AG04449 (cell line): ENCODE measurements at regions of chr3 and their contacts with region 1.

Region 1: GRCh38 chr3:151146071-151146730 is 56.8 kb downstream of the GPR171 start:
- DNase-seq: no peak
- H3K4me3 ChIP-seq: no peak overlapping the region
- CTCF ChIP-seq: peak; percentile 79

Region 2: GRCh38 chr3:150721285-150722130 is 424.7 kb before region 1 on chr3:
- CTCF ChIA-PET with region 1: interaction called, 14 read pairs
- POLR2A ChIA-PET with region 1: no interaction called
- DNase-seq: no peak
- H3K4me3 ChIP-seq: no peak overlapping the region
- CTCF ChIP-seq: peak; percentile 63

Region 3: DNA sequence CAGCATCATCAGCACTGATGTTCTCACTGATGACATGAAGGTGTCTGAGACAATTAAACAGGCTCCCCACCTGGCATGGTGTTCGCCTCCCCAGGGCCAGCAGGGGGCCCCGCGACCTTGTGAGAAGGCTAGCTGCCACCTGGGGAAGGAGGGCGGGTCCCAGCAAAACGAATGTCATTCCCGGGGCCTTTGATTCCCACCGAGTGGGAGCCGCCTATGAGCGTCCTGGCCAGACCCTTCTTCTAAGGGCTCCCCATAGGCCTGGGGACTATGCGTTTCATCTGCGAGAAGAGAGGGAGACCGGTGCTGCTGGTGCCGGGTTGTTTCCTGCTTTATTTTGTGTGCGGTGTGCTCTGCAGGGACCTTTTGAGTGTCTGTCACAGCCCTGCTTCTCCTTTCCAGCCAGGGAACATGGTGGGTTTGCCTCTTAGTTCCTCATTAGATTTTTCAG is 220.4 kb before region 1 on chr3:
- CTCF ChIA-PET with region 1: interaction called, 11 read pairs
- POLR2A ChIA-PET with region 1: no interaction called
- DNase-seq: no peak
- H3K4me3 ChIP-seq: no peak overlapping the region
- CTCF ChIP-seq: peak; percentile 78

Region 4: GRCh38 chr3:151008699-151009098 is 137.5 kb before region 1 on chr3:
- CTCF ChIA-PET with region 1: interaction called, 219 read pairs
- POLR2A ChIA-PET with region 1: no interaction called
- DNase-seq: no peak
- H3K4me3 ChIP-seq: no peak overlapping the region
- CTCF ChIP-seq: peak; percentile 42

Region 5: DNA sequence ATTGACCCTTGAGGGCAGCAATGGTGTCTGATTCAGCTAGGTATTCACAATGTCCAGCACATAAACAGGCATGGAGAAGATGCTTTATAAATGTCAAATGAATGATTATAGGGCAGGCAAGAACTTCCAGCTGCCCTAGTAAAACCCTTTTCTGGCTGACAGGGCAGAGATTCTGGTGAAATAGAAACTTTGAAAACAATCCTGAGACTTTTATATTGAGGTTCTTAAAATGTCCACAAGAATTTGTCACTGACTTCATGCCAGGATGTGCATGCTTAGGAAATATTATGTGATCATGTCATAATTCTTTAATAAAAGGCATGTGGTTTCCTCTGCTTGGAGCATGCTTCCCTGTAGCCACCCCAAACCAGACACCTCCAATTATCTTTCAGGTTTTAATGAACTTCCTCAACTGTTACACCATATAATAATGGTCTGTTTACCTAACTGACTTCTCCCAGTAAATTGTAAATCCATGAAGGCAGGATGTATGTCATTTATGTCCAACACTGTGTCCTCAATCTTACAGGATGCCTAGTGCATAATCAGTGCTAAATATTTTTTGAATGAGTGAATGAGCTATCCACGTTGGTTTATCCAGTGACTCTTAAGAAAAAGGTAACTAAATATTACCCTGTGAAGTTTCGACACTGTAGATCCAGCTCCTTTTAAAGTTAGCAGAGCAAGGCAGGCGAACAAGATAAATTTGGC is 130.3 kb before region 1 on chr3:
- CTCF ChIA-PET with region 1: interaction called, 219 read pairs
- POLR2A ChIA-PET with region 1: no interaction called
- DNase-seq: no peak
- H3K4me3 ChIP-seq: no peak overlapping the region
- CTCF ChIP-seq: no peak

Region 6: GRCh38 chr3:151086484-151087456 is 59.4 kb before region 1 on chr3:
- CTCF ChIA-PET with region 1: interaction called, 11 read pairs
- POLR2A ChIA-PET with region 1: no interaction called
- DNase-seq: peak; percentile 34
- H3K4me3 ChIP-seq: peak overlapping the region; percentile 57
- CTCF ChIP-seq: peak; percentile 81

Region 7: DNA sequence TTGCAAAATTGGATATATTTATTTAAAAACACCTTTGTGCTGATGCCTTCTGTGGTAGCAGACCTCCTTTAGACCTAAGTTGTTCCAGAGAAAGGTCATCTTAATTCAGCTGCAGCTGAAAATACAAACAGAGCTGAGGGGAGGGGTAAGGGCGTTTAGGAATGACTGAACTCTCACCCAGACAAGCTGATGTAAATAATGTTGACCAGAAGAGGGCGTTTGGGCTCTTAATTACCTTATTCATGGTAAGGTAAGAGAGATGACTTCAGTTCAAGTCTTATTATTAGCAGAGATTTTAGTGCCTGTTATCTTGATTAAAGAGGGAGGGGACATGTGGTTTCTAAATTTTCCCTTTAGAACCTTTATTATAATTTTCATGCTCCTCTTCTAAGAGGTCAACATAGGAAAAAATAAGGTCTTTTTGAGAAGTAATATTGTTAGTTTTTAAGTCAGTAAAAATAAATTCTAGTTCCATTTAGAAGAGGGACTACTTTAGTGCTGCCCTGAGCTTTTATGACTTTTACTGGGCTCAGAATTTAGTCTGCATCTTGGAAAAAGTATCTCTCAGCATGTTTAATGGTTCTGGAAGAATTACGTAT is 10.5 kb after region 1 on chr3:
- CTCF ChIA-PET with region 1: interaction called, 15 read pairs
- POLR2A ChIA-PET with region 1: no interaction called
- DNase-seq: no peak
- H3K4me3 ChIP-seq: no peak overlapping the region
- CTCF ChIP-seq: peak; percentile 55

Region 8: GRCh38 chr3:151350656-151351618 is 204.7 kb after region 1 on chr3:
- CTCF ChIA-PET with region 1: no interaction called
- POLR2A ChIA-PET with region 1: no interaction called
- DNase-seq: no peak
- H3K4me3 ChIP-seq: no peak overlapping the region
- CTCF ChIP-seq: no peak